ENCODE measurements at regions of chr14 and their contacts with region 1.

Region 1: GRCh38 chr14:52552063-52552988 is at the starts of genes GPR137C and TXNDC16:
- DNase-seq: peak; percentile 94
- ATAC-seq: peak; percentile 91
- H3K4me3 Mint-ChIP-seq: peak within 1 kb of the TSS; percentile 91
- H3K27ac Mint-ChIP-seq: peak within 1 kb of the TSS; percentile 80
- H3K4me1 Mint-ChIP-seq: peaks cover 17% of the 10 kb centered on the region
- H3K27me3 Mint-ChIP-seq: peaks cover 2% of the 10 kb centered on the region
- CTCF ChIP-seq: no peak
- total RNA-seq, gene GPR137C: 0.05 and 0.16 TPM in 2 replicates
- total RNA-seq, gene TXNDC16: 1.9 and 3.9 TPM in 2 replicates

Region 2: DNA sequence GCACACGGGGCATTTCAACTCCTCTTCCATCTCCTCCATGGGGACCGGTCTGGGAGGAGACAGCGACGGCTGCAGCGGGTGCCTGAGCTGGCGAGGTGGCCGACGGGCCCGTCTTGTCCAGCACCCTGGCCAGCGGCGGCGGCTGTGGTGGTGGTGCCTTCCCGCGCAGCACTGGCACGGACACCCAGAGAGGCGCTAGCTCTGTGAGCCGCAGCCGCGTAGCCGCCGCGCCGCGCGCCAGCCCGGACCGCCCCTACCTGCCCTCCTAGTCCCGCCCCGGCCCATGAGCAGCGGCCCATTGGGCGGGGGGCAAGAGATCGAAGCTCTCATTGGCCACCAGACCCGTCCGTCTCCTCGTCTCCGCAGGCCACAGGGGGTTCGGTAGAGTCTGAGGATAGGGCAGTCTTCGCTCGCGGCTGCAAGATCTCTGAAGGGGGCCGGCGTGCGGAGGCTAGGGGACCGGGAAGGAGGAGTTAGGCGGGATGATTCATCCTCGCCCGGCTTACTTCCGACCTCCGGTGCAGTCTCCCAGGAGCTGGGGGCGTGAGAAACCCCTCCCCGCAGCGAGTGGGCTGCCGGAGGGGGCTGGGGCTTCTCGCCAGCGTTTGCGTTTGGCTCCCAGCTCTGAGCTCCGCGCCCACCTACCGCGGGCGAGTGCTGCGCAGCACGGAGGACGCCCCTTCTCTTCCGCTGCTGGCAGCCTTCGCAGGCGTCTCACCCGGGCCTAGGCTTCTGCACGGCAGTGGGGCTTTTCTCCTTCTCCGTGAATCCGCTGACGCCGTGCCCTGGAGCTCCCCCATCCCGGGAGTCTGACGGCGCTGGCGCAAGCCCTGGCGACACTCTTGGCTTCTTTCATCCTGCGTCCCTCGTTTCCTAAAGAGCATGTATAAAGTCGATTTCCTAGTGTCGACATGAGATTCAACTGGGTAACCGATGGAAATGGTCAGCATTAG is 1457.1 kb before region 1 on chr14 and contains the start of gene TRIM9:
- CTCF ChIA-PET with region 1: no interaction called
- POLR2A ChIA-PET with region 1: no interaction called
- intact Hi-C with region 1: loop called (anchors 1 kb)
- DNase-seq: peak; percentile 88
- ATAC-seq: peak; percentile 98
- H3K4me3 Mint-ChIP-seq: peak within 1 kb of the TSS; percentile 91
- H3K27ac Mint-ChIP-seq: peak within 1 kb of the TSS; percentile 18
- H3K4me1 Mint-ChIP-seq: peaks cover 27% of the 10 kb centered on the region
- H3K27me3 Mint-ChIP-seq: peaks cover 26% of the 10 kb centered on the region
- CTCF ChIP-seq: no peak
- total RNA-seq, gene TRIM9: 0.24 and 0.67 TPM in 2 replicates

Region 3: GRCh38 chr14:51989293-51990234 is 562.8 kb before region 1 on chr14 and contains the start of gene RTRAF:
- CTCF ChIA-PET with region 1: no interaction called
- POLR2A ChIA-PET with region 1: no interaction called
- intact Hi-C with region 1: loop called (anchors 1 kb)
- DNase-seq: peak; percentile 86
- ATAC-seq: peak; percentile 97
- H3K4me3 Mint-ChIP-seq: peak within 1 kb of the TSS; percentile 98
- H3K27ac Mint-ChIP-seq: peak within 1 kb of the TSS; percentile 93
- H3K4me1 Mint-ChIP-seq: peaks cover 37% of the 10 kb centered on the region
- H3K27me3 Mint-ChIP-seq: no peaks in the 10 kb centered on the region
- CTCF ChIP-seq: no peak
- total RNA-seq, gene RTRAF: 160 and 163 TPM in 2 replicates

Region 4: DNA sequence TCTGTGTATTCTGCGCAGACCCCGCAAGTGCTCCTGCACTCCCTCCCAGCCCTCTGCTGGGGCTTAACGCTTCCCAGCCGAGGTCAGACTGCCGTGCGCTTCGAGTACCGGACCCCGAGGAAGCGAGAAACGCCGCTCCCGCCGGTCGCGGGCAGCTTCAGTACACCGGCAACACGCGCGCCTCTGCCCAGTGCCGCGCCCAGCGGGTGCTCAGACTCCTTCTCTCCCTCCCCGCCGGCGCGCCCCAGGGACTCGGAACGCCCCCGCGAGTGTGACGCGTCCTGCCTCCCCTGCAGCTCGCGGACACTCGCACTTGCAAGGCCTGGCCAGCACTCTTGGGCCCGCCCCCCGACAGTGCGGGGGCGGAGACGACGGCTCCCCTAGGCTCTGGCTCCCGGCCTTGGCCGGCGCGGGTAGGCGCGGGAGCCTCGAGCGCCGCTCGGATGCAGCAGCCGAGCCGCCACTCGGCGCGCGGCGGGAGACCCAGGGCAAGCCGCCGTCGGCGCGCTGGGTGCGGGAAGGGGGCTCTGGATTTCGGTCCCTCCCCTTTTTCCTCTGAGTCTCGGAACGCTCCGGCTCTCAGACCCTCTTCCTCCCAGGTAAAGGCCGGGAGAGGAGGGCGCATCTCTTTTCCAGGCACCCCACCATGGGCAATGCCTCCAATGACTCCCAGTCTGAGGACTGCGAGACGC is 238.3 kb before region 1 on chr14 and contains the start of gene PTGER2:
- CTCF ChIA-PET with region 1: no interaction called
- POLR2A ChIA-PET with region 1: interaction called, 3 read pairs
- intact Hi-C with region 1: loop called (anchors 5 kb)
- DNase-seq: peak; percentile 44
- ATAC-seq: peak; percentile 55
- H3K4me3 Mint-ChIP-seq: peak within 1 kb of the TSS; percentile 88
- H3K27ac Mint-ChIP-seq: peak within 1 kb of the TSS; percentile 4
- H3K4me1 Mint-ChIP-seq: peaks cover 50% of the 10 kb centered on the region
- H3K27me3 Mint-ChIP-seq: peaks cover 50% of the 10 kb centered on the region
- CTCF ChIP-seq: no peak
- total RNA-seq, gene PTGER2: 0.09 and 0.12 TPM in 2 replicates

Region 5: DNA sequence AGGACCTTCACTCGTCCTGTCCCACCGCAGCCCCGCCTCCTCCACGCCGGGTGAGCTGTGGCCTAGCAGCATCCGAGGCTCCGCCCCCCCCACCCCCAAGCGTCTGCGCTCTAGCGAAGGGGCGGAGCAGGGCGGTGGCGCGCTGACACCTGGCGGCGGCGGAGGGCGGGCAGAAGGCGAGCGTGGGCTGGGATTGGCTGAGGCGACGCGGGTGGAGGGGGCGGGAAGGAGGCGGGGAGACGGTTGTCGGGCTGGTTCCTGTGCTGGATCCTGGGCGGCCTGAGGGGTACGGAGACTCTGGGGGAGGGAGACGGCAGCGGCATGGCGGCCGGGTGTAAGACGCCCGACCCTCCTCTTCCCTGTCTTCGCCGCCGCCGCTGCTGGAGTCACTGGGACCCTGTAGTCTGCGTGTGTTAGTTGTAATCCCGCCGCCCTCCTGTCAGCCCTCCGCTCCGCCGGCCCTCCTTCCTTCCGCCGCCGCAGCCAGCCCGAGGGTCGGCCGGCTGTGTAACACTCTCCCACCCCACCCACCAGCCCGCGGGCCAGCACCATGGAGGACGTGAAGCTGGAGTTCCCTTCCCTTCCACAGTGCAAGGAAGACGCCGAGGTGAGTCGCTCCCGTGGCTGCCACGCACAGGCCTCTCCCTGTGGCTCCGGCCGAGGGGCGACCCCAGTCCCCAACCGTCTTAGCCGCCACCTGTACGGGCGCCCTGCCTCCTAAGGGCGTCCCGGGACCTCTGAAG is 177.8 kb after region 1 on chr14 and contains the start of gene STYX:
- CTCF ChIA-PET with region 1: no interaction called
- POLR2A ChIA-PET with region 1: interaction called, 3 read pairs
- intact Hi-C with region 1: loop called (anchors 1 kb)
- DNase-seq: peak; percentile 95
- ATAC-seq: peak; percentile 96
- H3K4me3 Mint-ChIP-seq: peak within 1 kb of the TSS; percentile 94
- H3K27ac Mint-ChIP-seq: peak within 1 kb of the TSS; percentile 89
- H3K4me1 Mint-ChIP-seq: peaks cover 46% of the 10 kb centered on the region
- H3K27me3 Mint-ChIP-seq: no peaks in the 10 kb centered on the region
- CTCF ChIP-seq: no peak
- total RNA-seq, gene STYX: 13.1 and 13.5 TPM in 2 replicates

Region 6: DNA sequence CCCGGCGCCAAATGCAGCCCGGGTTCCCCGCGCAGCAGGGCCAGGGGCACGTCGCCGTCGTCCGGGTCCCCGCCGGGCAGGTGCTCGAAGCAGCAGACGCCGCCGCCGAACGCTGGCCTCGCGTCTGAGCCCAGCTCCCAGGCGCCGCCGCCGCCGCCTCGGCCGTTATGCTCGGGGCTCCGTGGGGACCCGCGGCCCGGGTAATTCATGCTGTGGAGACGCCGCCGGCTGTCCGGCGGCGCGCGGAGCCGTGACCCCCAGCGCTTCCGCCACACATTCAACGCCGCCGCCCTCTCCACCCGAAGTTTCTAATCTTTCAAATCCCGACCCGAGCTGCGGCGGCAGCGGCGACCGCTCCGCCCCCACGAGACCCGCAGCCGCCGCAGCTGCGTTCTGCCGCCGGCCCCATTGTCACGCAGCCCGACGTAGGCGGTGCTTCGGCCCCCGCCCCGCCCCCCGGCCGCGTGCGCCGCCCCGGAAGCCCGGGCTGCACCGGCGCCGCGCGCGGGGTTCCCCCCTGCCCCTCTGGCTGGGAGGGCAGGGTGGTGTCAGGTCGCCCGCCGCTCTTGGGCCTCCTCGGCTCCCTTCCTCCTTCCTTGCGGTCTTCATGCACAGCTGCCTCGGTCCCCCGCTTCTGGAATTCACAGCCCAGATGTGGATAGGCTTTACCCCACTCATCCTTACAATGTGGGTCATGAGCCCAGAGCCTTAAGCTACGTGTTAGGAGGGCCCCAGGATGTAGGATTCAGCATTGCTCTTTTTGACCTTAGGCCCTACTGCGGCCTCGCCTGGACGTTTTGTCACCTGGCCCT is 600.8 kb after region 1 on chr14 and contains the start of gene DDHD1:
- CTCF ChIA-PET with region 1: no interaction called
- POLR2A ChIA-PET with region 1: interaction called, 8 read pairs
- intact Hi-C with region 1: loop called (anchors 1 kb)
- DNase-seq: peak; percentile 92
- ATAC-seq: peak; percentile 86
- H3K4me3 Mint-ChIP-seq: peak within 1 kb of the TSS; percentile 98
- H3K27ac Mint-ChIP-seq: peak within 1 kb of the TSS; percentile 98
- H3K4me1 Mint-ChIP-seq: peaks cover 48% of the 10 kb centered on the region
- H3K27me3 Mint-ChIP-seq: no peaks in the 10 kb centered on the region
- CTCF ChIP-seq: no peak
- total RNA-seq, gene DDHD1: 44.0 and 59.8 TPM in 2 replicates